ENCODE measurements at regions of chr7 and their contacts with region 1.

Region 1: DNA sequence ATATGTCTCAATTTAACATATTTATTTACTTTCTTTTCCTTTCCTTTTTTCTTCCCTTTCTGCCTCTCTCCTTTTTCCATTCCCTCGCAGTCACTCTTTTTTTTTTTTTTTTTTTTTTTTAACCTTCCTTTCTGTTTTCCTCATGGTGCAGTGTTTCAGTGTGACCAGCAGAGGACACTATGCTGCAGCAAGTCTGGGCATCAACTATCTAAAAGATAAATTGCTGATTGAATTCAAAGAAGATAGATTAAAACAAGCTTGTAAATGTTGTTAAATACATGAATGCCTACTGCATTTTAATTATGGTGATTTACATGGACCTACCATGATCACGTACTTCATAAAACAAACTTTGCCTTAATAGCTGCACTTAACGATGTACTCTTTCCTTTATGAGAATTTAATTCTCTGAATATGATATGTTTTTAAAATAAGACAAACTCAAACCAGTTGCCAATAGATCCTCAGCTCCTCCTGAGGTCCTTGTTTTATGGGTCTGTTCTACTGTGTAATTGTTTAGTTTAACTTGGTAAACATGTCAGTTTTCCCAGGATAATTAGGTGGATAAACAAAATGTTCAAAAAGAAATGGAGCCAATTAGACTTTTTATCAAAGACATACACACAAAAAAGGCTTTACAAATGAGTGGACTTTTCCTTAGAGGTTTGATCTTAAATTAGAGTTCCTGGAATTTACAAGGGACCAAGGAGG is 101.0 kb upstream of the AGR3 start:
- DNase-seq: no peak
- ATAC-seq: no peak
- H3K4me3 ChIP-seq: no peak overlapping the region
- H3K27ac ChIP-seq: peak overlapping the region; percentile 36; the same call in 1 of the 2 replicates
- H3K4me1 ChIP-seq: peaks cover 20% of the 10 kb centered on the region
- H3K27me3 ChIP-seq: no peaks in the 10 kb centered on the region
- CTCF ChIP-seq: peak; percentile 96; the same call in 1 of the 2 replicates

Region 2: DNA sequence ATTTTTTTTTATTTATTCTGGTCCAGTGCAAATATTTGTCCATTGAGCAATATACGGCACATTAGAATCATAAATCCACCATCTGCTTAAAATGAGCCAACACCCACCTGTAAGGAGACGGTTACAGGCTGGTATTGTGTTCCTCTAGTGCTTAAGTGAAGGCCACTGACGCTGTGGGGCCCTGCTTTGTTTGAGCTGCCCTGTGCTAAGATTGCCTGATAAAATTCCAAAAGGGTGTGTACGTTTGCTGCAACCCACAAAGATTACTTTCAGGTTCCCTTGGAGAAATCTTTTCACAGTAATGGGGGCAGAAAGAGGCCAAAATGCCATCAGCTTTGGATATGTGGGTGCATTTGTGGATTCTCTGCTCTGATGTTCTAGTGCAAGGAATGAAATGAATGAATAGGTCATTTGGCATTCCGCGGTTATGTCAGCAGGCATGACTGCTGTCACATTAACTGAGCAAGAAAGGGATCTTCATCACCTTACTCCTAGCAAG is 135.4 kb before region 1 on chr7:
- CTCF ChIA-PET with region 1: no interaction called
- POLR2A ChIA-PET with region 1: interaction called, 21 read pairs
- in situ Hi-C with region 1: no loop called
- intact Hi-C with region 1: no loop called
- DNase-seq: peak; percentile 89
- ATAC-seq: peak; percentile 99
- H3K4me3 ChIP-seq: peak overlapping the region; percentile 6 to 40; a peak in 3 of 4 replicates
- H3K27ac ChIP-seq: peak overlapping the region; percentile 95
- H3K4me1 ChIP-seq: peaks cover 24% of the 10 kb centered on the region
- H3K27me3 ChIP-seq: no peaks in the 10 kb centered on the region
- CTCF ChIP-seq: no peak

Region 3: DNA sequence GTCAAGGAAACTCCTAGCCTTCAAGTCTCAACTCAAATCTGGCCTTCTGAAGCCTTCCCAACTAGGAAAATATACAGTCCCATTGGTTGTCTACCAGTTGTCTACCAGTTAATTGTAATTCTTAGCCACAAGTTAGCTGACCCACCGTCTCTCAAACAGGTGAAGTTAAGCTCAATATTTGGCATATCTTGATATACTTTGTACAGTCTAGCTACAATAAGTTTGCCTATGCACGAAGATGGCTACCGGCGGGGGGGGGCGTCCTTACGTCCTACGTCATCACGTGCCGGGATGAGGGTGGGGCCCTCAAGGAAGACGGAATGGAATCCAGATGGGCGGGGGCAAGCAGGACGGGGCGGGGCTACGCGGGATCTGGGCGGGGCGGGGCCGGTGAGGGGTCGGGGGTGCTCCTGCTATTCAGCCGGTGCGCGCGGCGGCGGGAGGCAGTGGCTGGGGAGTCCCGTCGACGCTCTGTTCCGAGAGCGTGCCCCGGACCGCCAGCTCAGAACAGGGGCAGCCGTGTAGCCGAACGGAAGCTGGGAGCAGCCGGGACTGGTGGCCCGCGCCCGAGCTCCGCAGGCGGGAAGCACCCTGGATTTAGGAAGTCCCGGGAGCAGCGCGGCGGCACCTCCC is 315.5 kb after region 1 on chr7 and contains the start of gene AHR:
- CTCF ChIA-PET with region 1: no interaction called
- POLR2A ChIA-PET with region 1: no interaction called
- in situ Hi-C with region 1: no loop called
- intact Hi-C with region 1: loop called (anchors 2 kb)
- DNase-seq: no peak
- ATAC-seq: peak; percentile 88
- H3K4me3 ChIP-seq: peak within 1 kb of the TSS; percentile 64 to 93
- H3K27ac ChIP-seq: peak within 1 kb of the TSS; percentile 96
- H3K4me1 ChIP-seq: peaks cover 22% of the 10 kb centered on the region
- H3K27me3 ChIP-seq: no peaks in the 10 kb centered on the region
- CTCF ChIP-seq: no peak
- total RNA-seq, gene AHR: 36.6 TPM

Region 4: GRCh38 chr7:17646253-17646956 is 663.6 kb after region 1 on chr7:
- CTCF ChIA-PET with region 1: no interaction called
- POLR2A ChIA-PET with region 1: no interaction called
- in situ Hi-C with region 1: no loop called
- intact Hi-C with region 1: loop called (anchors 5 kb)
- DNase-seq: peak; percentile 69
- ATAC-seq: peak; percentile 72
- H3K4me3 ChIP-seq: no peak overlapping the region
- H3K27ac ChIP-seq: no peak overlapping the region
- H3K4me1 ChIP-seq: no peaks in the 10 kb centered on the region
- H3K27me3 ChIP-seq: no peaks in the 10 kb centered on the region
- CTCF ChIP-seq: peak; percentile 66; the same call in 1 of the 2 replicates

Region 5: DNA sequence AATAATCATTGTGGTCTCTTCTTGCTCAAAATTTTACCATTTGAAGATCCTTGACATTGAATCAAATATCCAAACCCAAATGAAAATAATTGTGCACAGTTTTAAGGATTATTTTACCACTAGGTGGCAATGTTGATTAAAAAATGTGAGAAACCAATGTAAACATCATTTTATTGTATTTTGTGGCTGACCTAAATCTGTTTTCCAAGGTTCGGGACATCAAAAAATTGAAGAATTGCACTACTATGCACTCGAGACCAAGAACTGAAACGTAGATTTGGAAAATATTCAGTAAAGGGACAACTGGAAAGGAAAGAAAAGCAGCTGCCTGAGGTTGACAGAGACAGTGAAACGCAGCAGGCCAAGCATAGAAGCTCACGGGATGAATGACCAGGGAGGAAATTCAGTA is 698.2 kb after region 1 on chr7:
- CTCF ChIA-PET with region 1: no interaction called
- POLR2A ChIA-PET with region 1: interaction called, 11 read pairs
- in situ Hi-C with region 1: no loop called
- intact Hi-C with region 1: no loop called
- DNase-seq: peak; percentile 52
- ATAC-seq: 0 out of 2 replicates have a peak, but pooled peaks have one; percentile 27
- H3K4me3 ChIP-seq: no peak overlapping the region
- H3K27ac ChIP-seq: no peak overlapping the region; the same call in 1 of the 2 replicates
- H3K4me1 ChIP-seq: peaks cover 10% of the 10 kb centered on the region
- H3K27me3 ChIP-seq: no peaks in the 10 kb centered on the region; the same call in 1 of the 2 replicates
- CTCF ChIP-seq: peak; percentile 64

Region 6: GRCh38 chr7:17741426-17741825 is 758.6 kb after region 1 on chr7:
- CTCF ChIA-PET with region 1: no interaction called
- POLR2A ChIA-PET with region 1: no interaction called
- in situ Hi-C with region 1: no loop called
- intact Hi-C with region 1: no loop called
- DNase-seq: no peak
- ATAC-seq: no peak
- H3K4me3 ChIP-seq: no peak overlapping the region
- H3K27ac ChIP-seq: no peak overlapping the region
- H3K4me1 ChIP-seq: no peaks in the 10 kb centered on the region
- H3K27me3 ChIP-seq: no peaks in the 10 kb centered on the region
- CTCF ChIP-seq: no peak